WTC11 (cell line): ENCODE measurements at regions of chr22 and their contacts with region 1.

Region 1: DNA sequence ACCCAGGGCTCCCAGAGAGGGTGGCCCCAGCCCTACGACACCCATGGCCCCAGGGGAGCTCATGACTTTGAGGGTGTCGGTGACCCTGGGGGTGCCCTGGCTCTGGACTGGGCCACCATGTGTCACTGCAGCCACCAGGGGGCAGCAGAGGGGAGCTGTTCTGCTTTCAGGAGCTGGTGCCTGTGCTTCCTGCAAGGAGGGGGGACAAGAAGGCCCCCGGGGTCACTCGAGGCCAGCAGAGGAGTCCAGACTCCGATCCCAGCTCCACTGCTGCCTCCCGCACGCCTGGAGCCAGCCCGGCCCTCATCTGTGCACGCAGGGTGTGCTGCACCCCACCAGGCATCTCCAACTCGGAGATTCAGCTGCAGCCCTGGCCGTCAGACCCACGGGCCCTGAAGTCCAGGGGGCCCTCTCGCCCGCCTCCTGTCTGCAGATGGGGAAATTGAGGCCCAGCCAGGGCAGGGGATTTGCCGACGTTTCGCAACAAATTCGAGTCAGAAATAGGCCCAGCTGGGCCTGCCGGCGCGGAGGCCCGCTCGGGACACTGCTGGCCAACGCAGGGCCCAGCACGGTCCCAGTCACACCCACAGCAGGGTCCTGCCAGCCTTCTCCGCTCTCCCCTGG is 29.5 kb upstream of the WNT7B start:
- DNase-seq: peak; percentile 92
- ATAC-seq: peak; percentile 84
- H3K4me3 Mint-ChIP-seq: no peak overlapping the region
- H3K27ac Mint-ChIP-seq: peak overlapping the region; percentile 45
- H3K4me1 Mint-ChIP-seq: no peaks in the 10 kb centered on the region; the same call in 1 of the 2 replicates
- H3K27me3 Mint-ChIP-seq: no peaks in the 10 kb centered on the region
- CTCF ChIP-seq: peak; percentile 89

Region 2: DNA sequence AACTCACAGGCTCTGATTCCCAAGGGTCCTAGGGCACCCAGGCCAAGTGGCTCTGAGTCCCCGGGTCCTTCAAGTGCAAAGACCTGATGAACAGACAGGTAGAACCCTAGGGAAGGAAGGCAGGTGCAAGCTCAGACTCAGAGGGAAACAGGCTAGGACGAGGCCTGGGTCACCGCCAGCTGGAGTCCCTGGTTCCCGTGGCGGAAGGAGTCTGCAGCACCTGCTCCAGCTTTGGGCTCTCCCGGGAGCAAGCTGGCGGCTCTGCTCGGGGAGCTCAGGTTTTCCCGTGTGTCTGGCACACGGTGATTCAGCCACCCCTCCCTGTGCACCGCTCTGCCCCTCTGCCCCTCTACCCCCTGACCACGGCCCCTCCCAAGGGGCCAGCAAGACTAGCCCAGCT is 89.3 kb before region 1 on chr22:
- CTCF ChIA-PET with region 1: no interaction called
- POLR2A ChIA-PET with region 1: no interaction called
- DNase-seq: no peak
- ATAC-seq: no peak
- H3K4me3 Mint-ChIP-seq: no peak overlapping the region
- H3K27ac Mint-ChIP-seq: no peak overlapping the region
- H3K4me1 Mint-ChIP-seq: no peaks in the 10 kb centered on the region
- H3K27me3 Mint-ChIP-seq: no peaks in the 10 kb centered on the region; the same call in 1 of the 2 replicates
- CTCF ChIP-seq: no peak

Region 3: DNA sequence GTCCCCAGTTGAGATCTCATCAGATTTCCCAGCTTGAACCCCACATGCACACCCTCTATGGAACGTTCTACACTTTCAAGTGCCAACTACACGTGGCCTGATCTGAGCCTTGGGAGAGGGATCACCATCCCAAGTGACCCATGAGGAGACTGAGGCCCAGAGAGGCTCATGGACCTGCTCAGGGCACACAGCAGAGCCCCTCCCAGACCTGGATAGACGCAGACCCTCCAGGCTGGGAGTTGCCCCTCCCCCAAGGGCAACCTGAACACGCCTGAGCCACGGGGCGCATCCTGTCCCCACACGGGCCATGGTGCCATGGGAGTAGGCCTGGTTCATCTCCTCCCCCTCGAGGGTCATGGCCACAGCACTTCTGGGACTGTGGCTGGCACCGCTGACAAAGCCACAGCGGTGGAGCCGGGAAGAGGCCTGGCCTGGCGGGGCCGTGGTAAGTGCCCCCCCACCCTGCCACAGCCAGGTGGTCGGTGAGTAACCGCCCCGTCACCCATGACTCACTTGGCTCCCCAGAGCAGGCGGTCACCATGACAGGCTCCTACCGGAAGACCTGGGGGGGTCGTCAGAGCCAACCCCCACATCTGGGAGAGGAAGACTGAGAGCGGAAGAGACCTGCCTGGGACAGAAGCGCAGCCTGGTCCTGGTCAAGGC is 37.6 kb before region 1 on chr22:
- CTCF ChIA-PET with region 1: interaction called, 11 read pairs
- POLR2A ChIA-PET with region 1: no interaction called
- DNase-seq: no peak
- ATAC-seq: no peak
- H3K4me3 Mint-ChIP-seq: no peak overlapping the region
- H3K27ac Mint-ChIP-seq: no peak overlapping the region
- H3K4me1 Mint-ChIP-seq: peaks cover 24% of the 10 kb centered on the region
- H3K27me3 Mint-ChIP-seq: peaks cover 59% of the 10 kb centered on the region
- CTCF ChIP-seq: no peak

Region 4: DNA sequence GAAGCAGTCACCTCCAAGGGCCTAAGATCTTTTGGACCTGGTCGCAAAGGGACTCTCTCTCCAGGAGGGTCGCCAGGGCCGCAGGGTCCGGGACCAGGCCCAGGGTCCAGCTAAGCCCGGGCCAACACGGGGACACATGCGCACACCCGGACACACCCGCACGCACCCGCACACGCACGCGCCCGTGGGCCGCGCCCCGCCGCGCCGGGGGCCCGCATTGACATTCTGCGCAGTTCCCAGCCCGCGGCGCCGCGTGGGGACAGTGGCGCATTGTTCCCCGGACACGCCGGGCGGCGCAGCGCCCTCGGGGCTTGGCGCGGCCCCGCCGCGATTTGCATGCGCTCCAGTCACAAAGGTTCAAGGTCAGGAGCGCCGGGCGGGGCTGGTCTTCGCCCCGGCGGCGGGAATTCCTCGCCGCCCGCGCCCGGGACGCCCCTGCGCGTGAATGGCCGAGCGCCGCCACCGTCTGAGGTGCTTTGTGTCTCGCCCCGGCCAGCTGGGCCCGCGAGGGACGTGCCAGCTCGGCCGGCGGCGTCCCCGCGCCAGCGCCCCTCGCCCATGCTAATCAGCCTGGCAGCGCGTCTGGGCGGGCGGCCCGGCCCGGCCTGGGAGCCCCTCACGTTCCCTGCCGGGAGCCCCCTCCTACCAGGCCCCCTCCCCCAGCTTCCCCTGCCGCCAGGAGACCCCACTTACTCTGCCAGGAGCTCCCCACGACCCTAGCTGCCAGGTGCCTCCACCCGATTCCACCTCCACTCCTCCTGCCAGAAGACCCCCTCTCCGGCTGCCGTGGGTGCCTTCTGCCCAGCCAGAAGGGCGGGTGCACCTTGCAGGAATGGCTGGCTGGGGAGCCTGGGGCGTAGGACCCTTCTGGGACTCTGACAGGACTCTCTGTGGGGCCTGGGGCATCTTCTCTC is 21.0 kb after region 1 on chr22:
- CTCF ChIA-PET with region 1: interaction called, 65 read pairs
- POLR2A ChIA-PET with region 1: no interaction called
- DNase-seq: peak; percentile 48
- ATAC-seq: peak; percentile 11
- H3K4me3 Mint-ChIP-seq: peak overlapping the region; percentile 76
- H3K27ac Mint-ChIP-seq: no peak overlapping the region
- H3K4me1 Mint-ChIP-seq: peaks cover 31% of the 10 kb centered on the region
- H3K27me3 Mint-ChIP-seq: peaks cover 47% of the 10 kb centered on the region
- CTCF ChIP-seq: no peak

Region 5: GRCh38 chr22:46061431-46062231 is 55.1 kb after region 1 on chr22:
- CTCF ChIA-PET with region 1: interaction called, 16 read pairs
- POLR2A ChIA-PET with region 1: no interaction called
- DNase-seq: peak; percentile 74
- ATAC-seq: peak; percentile 88
- H3K4me3 Mint-ChIP-seq: peak overlapping the region; percentile 31; the same call in 1 of the 2 replicates
- H3K27ac Mint-ChIP-seq: no peak overlapping the region
- H3K4me1 Mint-ChIP-seq: no peaks in the 10 kb centered on the region
- H3K27me3 Mint-ChIP-seq: peaks cover 54% of the 10 kb centered on the region
- CTCF ChIP-seq: no peak

Region 6: DNA sequence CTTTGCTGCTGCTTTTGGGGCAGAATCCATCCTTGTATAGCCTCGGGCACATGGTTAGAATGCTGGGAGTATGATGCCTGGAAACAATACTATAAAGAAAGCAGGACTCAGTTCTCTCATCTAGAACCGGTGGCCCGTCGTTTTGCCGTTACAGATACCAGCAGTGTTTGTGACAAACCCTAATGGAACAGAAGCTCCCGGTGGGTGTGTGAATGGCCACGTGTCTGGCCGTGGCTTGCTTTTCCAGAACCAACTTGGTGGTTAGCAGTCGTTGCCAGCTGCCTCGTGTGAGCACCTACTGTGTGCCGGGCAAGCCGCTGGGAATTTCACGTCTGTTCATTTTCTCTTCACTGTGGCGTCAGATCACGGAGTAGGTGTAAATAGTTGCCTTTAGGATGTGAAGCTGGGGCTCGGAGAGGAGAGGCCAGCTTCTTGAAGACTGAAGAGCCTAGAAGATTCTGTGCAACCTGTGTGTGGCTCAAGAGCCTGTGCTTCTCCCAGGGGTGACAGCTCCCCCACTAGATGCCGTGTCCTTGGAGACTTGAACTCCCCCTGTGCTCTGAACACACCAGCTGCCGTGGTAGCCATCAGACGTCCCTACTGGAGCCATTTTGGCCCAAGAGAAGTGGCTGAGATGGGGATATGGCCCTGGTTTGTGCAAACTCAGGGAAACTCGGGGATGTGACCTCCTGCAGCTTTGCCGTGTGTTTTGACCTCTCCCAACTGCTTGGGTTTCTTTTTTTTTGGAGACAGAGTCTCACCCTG is 86.3 kb after region 1 on chr22:
- CTCF ChIA-PET with region 1: interaction called, 13 read pairs
- POLR2A ChIA-PET with region 1: no interaction called
- DNase-seq: no peak
- ATAC-seq: no peak
- H3K4me3 Mint-ChIP-seq: no peak overlapping the region
- H3K27ac Mint-ChIP-seq: no peak overlapping the region; the same call in 1 of the 2 replicates
- H3K4me1 Mint-ChIP-seq: no peaks in the 10 kb centered on the region
- H3K27me3 Mint-ChIP-seq: no peaks in the 10 kb centered on the region
- CTCF ChIP-seq: no peak

Region 7: DNA sequence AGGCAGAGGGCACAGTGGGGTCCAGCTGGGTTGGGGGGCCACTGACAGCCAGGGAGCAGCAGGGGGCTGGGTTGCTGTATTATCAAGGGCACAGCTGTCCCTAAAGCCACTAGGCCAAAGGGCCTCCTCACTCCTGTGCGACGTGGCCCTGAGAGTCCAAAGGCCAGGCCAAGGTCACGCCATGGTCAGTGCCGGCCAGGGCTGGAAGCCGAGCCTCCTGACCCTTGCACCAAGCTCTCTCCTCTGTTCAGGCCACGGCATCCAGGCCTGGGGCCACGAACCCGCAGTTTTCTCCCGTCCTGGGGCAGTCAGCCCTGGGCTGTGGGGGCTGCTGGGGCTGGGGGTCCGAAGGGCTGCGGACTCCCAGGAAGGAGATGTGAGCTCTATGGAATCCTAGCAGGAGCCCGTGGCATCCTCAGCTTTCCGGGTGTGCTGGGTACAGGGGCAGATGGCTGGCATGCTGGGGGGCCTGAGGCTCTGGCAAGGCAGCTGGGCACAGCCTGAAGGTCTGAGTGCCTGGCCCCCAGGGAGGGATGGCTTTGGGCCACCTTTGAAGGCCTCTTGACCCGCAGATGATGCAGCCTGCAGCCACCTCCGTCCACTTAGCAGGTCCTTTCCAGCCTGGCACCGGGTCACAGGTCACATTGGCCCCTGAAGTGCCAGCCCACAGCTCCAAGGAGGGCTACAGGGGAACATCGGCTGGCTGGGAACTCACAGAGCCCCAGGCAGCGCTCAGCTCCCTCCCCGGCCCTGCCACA is 126.5 kb after region 1 on chr22:
- CTCF ChIA-PET with region 1: interaction called, 15 read pairs
- POLR2A ChIA-PET with region 1: no interaction called
- DNase-seq: no peak
- ATAC-seq: no peak
- H3K4me3 Mint-ChIP-seq: no peak overlapping the region
- H3K27ac Mint-ChIP-seq: no peak overlapping the region
- H3K4me1 Mint-ChIP-seq: no peaks in the 10 kb centered on the region
- H3K27me3 Mint-ChIP-seq: no peaks in the 10 kb centered on the region
- CTCF ChIP-seq: no peak

Region 8: GRCh38 chr22:46193898-46194310 is 187.4 kb after region 1 on chr22:
- CTCF ChIA-PET with region 1: no interaction called
- POLR2A ChIA-PET with region 1: no interaction called
- DNase-seq: no peak
- ATAC-seq: no peak
- H3K4me3 Mint-ChIP-seq: no peak overlapping the region
- H3K27ac Mint-ChIP-seq: no peak overlapping the region
- H3K4me1 Mint-ChIP-seq: peaks cover 6% of the 10 kb centered on the region; the same call in 1 of the 2 replicates
- H3K27me3 Mint-ChIP-seq: no peaks in the 10 kb centered on the region; the same call in 1 of the 2 replicates
- CTCF ChIP-seq: no peak